Endothelial cell of umbilical vein (primary cell): ENCODE measurements at regions of chr14 and their contacts with region 1.

Region 1: GRCh38 chr14:56378475-56378877 is 201.1 kb upstream of the TMEM260 start:
- DNase-seq: peak; percentile 90
- H3K4me3 ChIP-seq: no peak overlapping the region
- H3K27ac ChIP-seq: peak overlapping the region; percentile 54
- H3K4me1 ChIP-seq: peaks cover 24% of the 10 kb centered on the region
- H3K27me3 ChIP-seq: no peaks in the 10 kb centered on the region
- CTCF ChIP-seq: no peak
- POLR2A ChIP-seq: no peak

Region 2: GRCh38 chr14:56412468-56413434 is 34.3 kb after region 1 on chr14:
- CTCF ChIA-PET with region 1: no interaction called
- POLR2A ChIA-PET with region 1: no interaction called
- dilution Hi-C with region 1: no loop called
- intact Hi-C with region 1: loop called (anchors 5 kb)
- DNase-seq: peak; percentile 79
- H3K4me3 ChIP-seq: no peak overlapping the region
- H3K27ac ChIP-seq: no peak overlapping the region
- H3K4me1 ChIP-seq: peaks cover 24% of the 10 kb centered on the region
- H3K27me3 ChIP-seq: no peaks in the 10 kb centered on the region
- CTCF ChIP-seq: no peak
- POLR2A ChIP-seq: peak; percentile 39

Region 3: GRCh38 chr14:57578801-57579200 is 1200.3 kb after region 1 on chr14:
- CTCF ChIA-PET with region 1: no interaction called
- POLR2A ChIA-PET with region 1: no interaction called
- dilution Hi-C with region 1: no loop called
- intact Hi-C with region 1: no loop called
- DNase-seq: no peak
- H3K4me3 ChIP-seq: no peak overlapping the region
- H3K27ac ChIP-seq: no peak overlapping the region
- H3K4me1 ChIP-seq: no peaks in the 10 kb centered on the region
- H3K27me3 ChIP-seq: no peaks in the 10 kb centered on the region
- CTCF ChIP-seq: no peak
- POLR2A ChIP-seq: no peak